Activated CD4-positive, alpha-beta memory T cell treated with anti-CD3 and anti-CD28 coated beads, Interleukin-2, amount 10 ng/mL, durations not matched to agents 7 days and 5 days (primary cell): ENCODE measurements at regions of chr10 and their contacts with region 1.

Region 1: GRCh38 chr10:117167789-117168674 is 29.3 kb upstream of the KCNK18 start:
- DNase-seq: peak; percentile 62
- H3K4me3 Mint-ChIP-seq: peak overlapping the region; percentile 13
- H3K27ac Mint-ChIP-seq: no peak overlapping the region
- H3K4me1 Mint-ChIP-seq: peaks cover 18% of the 10 kb centered on the region
- H3K27me3 Mint-ChIP-seq: peaks cover 81% of the 10 kb centered on the region

Region 2: DNA sequence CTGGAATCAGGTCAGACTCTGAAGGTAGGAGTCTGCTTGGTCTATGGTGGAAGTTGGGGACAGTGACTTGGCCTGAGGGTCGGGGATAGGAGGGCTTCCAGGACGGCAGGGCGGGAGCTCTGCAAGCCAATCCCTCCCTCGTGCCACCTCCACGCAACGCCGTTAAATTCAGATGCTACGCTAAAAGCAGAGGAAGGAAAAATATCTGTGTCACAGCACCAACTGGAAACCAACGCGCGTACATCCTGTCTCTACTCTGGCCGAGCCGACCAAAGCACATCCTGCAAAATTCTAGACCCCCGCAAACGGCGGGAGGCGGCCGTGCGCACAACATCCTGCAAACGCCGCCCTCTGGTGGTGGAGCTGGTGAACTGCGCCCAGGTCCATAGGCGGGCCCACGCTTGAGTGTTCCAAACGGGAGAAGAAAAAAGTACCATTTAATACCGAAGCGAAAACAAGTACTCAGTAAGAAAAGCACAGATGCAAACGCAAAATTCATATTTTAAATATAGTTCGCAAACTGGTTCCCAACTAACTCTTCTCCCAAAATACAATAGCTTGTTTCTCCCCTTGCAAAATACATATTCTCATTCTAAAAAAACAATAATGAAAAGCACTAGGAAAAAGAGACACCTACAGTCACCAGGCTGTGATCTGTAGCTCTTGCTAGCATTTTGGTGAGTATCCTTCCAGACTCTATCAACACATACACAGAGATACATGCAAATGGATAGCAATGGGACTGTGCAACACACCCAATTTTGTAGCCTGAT is 380.0 kb before region 1 on chr10:
- CTCF ChIA-PET with region 1: interaction called, 10 read pairs
- POLR2A ChIA-PET with region 1: no interaction called
- DNase-seq: peak; percentile 79
- H3K4me3 Mint-ChIP-seq: peak overlapping the region; percentile 44
- H3K27ac Mint-ChIP-seq: no peak overlapping the region
- H3K4me1 Mint-ChIP-seq: peaks cover 16% of the 10 kb centered on the region
- H3K27me3 Mint-ChIP-seq: peaks cover 3% of the 10 kb centered on the region

Region 3: GRCh38 chr10:116796910-116797513 is 371.0 kb before region 1 on chr10:
- CTCF ChIA-PET with region 1: interaction called, 24 read pairs
- POLR2A ChIA-PET with region 1: no interaction called
- DNase-seq: peak; percentile 69
- H3K4me3 Mint-ChIP-seq: no peak overlapping the region
- H3K27ac Mint-ChIP-seq: no peak overlapping the region
- H3K4me1 Mint-ChIP-seq: peaks cover 3% of the 10 kb centered on the region
- H3K27me3 Mint-ChIP-seq: peaks cover 13% of the 10 kb centered on the region

Region 4: DNA sequence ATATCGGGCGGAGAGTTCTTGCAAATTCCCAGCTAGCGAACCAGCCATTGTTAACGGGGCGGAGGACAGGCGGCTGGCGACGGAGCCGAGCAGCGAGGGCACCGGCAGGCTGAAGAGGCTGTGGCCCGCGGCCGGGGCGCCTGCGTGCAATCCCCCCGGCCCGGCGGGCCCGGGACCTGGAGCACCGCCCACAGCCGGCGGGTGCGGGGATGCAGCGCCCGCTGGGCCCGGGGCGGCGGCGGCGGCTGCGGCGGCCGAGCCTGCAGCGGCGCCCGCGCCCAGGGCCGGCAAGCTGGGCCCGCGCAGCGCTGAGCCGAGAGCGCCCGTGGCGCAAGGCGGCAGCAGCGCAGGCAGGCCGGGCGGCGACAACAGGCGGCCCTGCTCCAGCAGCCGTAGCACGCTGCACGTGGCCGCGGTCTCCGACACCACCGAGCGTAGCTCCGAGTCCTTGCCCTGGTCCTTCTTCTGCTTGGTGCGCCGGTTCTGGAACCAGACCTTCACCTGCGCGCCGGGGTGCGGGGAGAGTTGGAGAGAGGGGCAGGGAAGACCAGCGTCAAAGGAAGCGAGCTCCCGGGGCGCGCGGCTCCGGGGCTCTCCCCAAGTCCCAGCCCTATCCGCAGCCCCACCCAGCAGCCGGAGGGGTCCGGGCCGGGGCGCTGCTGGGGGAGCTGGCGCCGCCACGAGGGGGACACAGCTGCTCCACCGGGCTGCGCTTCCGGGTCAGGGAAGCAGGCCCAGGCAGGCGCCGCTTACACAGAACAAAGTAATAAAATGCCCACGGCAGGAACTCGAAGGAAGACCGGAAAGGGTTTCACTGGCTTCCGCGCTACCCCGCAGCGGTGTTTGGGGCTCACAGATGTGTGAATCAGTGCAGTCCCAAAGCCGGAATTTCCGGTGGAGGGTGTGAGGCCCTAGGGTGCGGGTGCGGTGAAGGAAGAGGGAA is 33.7 kb before region 1 on chr10:
- CTCF ChIA-PET with region 1: interaction called, 15 read pairs
- POLR2A ChIA-PET with region 1: interaction called, 6 read pairs
- DNase-seq: no peak
- H3K4me3 Mint-ChIP-seq: no peak overlapping the region
- H3K27ac Mint-ChIP-seq: no peak overlapping the region
- H3K4me1 Mint-ChIP-seq: peaks cover 9% of the 10 kb centered on the region
- H3K27me3 Mint-ChIP-seq: peaks cover 83% of the 10 kb centered on the region

Region 5: DNA sequence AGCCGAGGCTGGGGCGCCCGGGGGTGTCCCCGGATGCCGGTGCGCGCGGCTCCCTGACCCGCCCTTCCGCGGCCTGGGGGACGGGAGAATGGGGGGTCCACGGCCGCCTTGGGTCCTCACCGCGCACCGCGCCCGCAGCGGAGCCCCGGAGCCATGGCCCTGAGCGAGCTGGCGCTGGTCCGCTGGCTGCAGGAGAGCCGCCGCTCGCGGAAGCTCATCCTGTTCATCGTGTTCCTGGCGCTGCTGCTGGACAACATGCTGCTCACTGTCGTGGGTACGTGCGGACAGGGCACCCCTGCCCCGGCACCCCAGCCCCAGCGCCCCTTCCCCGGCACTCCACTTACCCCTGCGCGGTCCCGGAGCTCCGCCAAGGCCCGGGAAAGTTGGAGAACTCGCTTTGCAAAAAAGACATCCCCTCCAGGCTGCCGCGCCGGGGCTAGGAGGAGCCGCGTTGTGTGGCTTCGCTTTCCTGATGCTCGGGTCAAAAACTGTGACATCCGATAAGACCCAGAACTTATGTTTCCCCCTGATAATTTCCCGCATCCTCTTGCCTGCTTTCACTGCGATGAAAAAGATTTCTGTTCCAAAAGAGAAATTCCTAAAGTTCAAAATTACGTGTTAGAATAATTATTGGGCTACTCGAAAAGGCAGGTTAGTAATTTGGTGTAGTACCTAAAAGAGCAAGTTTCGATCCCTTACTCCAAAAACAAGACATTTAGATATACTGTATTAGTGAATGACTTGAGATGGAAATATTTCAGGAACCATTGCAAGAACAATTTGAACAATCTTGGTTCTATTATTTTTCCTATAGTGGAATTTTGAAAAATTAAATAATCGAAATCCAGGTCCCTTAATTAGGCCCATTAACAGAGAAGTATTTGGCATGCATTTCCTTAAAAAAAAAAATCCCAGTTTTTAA is 73.8 kb after region 1 on chr10:
- CTCF ChIA-PET with region 1: no interaction called
- POLR2A ChIA-PET with region 1: no interaction called
- DNase-seq: no peak
- H3K4me3 Mint-ChIP-seq: no peak overlapping the region
- H3K27ac Mint-ChIP-seq: no peak overlapping the region
- H3K4me1 Mint-ChIP-seq: peaks cover 2% of the 10 kb centered on the region
- H3K27me3 Mint-ChIP-seq: peaks cover 36% of the 10 kb centered on the region